ENCODE measurements at regions of chr22 and their contacts with region 1.

Region 1: GRCh38 chr22:41479671-41480396 is 10.9 kb downstream of the ACO2 start:
- DNase-seq: no peak
- ATAC-seq: no peak
- H3K4me3 Mint-ChIP-seq: peak overlapping the region; percentile 79
- H3K27ac Mint-ChIP-seq: peak overlapping the region; percentile 96
- H3K4me1 Mint-ChIP-seq: peaks cover 87% of the 10 kb centered on the region
- H3K27me3 Mint-ChIP-seq: no peaks in the 10 kb centered on the region
- CTCF ChIP-seq: no peak

Region 2: DNA sequence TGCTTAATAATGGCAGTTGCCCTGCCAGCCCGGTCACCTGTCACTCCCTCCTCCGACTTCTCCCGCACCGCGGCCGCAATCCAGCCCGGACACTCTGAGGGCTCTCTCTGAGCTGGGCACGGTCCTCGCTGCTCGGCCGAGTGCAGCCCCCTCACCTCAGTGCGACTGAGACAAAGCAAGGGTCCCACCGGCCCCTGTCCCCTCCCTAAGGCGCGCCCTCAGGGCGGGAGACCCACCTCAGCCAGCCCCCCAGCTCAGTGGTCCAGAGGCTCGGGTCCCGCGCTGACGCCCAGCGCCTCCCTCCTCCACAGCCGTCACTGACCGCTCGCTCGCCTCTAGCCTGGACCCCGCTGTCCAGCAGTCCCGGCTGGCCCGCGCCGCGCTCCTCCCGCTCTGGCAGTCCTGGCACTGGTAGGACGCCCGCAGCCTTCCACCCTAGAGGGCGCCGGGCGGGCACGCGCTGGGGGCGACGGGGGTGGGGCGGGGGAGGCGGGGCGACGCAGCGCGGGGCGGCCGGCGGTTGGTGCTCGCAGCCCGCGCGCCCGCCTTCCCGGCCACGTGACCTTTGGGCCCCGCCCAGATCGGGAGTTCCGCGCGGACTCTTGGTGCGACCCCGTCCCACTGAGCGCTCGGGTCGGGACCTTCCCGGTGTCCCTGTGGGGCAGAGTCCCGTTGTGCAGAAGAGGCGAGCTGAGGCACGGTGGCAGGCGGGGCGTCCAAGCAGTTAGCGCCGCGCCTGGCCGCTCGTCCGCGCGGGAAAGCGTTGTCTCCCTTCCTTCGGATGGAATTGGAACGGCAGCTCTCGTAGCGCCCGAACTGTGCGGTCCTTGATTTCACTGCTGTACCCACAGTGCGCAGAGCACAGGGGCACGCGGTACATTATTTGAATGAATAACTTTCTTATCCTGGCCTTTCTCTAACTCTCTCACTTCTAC is 282.5 kb before region 1 on chr22:
- CTCF ChIA-PET with region 1: no interaction called
- POLR2A ChIA-PET with region 1: interaction called, 13 read pairs
- intact Hi-C with region 1: no loop called
- DNase-seq: peak; percentile 89
- ATAC-seq: peak; percentile 92
- H3K4me3 Mint-ChIP-seq: peak overlapping the region; percentile 89
- H3K27ac Mint-ChIP-seq: no peak overlapping the region
- H3K4me1 Mint-ChIP-seq: peaks cover 8% of the 10 kb centered on the region
- H3K27me3 Mint-ChIP-seq: peaks cover 4% of the 10 kb centered on the region
- CTCF ChIP-seq: no peak

Region 3: DNA sequence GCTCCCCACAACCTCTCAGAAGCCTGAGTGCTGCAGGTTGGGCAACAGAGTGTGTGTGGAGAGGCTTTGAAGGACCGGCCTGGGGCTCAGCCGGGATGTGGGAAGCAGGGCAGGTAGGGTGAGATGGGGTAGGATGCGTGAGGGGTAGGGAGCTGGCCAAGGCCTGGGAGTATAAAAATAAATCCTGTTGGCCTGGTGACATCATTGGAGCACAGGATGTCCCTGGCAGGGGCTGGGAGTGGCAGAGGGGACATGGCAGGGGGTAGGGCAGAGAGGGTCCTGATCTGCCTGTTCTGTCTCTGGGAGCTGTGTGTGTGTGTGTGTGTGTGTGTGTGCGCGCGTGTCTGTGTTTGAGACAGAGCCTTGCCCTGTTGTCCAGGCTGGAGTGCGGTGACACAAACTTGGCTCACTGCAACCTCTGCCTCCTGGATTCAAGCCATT is 69.5 kb before region 1 on chr22:
- CTCF ChIA-PET with region 1: no interaction called
- POLR2A ChIA-PET with region 1: interaction called, 13 read pairs
- intact Hi-C with region 1: no loop called
- DNase-seq: no peak
- ATAC-seq: no peak
- H3K4me3 Mint-ChIP-seq: no peak overlapping the region
- H3K27ac Mint-ChIP-seq: peak overlapping the region; percentile 68
- H3K4me1 Mint-ChIP-seq: peaks cover 62% of the 10 kb centered on the region
- H3K27me3 Mint-ChIP-seq: no peaks in the 10 kb centered on the region
- CTCF ChIP-seq: no peak

Region 4: GRCh38 chr22:41491374-41492100 is 11.7 kb after region 1 on chr22:
- CTCF ChIA-PET with region 1: no interaction called
- POLR2A ChIA-PET with region 1: interaction called, 17 read pairs
- intact Hi-C with region 1: no loop called
- DNase-seq: no peak
- ATAC-seq: no peak
- H3K4me3 Mint-ChIP-seq: no peak overlapping the region
- H3K27ac Mint-ChIP-seq: no peak overlapping the region
- H3K4me1 Mint-ChIP-seq: peaks cover 37% of the 10 kb centered on the region
- H3K27me3 Mint-ChIP-seq: no peaks in the 10 kb centered on the region
- CTCF ChIP-seq: no peak

Region 5: DNA sequence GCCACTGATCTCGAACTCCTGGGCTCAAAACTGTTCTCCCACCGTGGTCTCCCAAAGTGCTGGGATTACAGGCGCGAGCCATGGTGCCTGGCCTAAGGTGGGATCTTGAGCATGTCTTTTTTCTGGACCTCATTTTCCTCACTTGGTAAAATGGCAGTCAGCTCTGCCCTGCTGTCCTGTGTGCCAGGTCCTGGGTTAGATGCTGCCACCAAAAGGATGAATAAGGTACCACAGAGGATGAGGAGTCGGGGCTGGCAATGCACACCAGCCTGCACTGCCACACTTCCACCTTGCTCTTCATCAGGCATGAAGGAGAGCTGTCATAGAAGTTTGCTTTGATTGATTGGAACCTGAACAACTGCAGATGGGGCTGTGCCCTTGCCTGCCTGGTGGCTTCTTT is 21.4 kb after region 1 on chr22:
- CTCF ChIA-PET with region 1: interaction called, 31 read pairs
- POLR2A ChIA-PET with region 1: interaction called, 58 read pairs
- intact Hi-C with region 1: loop called (anchors 1 kb)
- DNase-seq: no peak
- ATAC-seq: peak; percentile 88
- H3K4me3 Mint-ChIP-seq: no peak overlapping the region
- H3K27ac Mint-ChIP-seq: peak overlapping the region; percentile 83
- H3K4me1 Mint-ChIP-seq: peaks cover 47% of the 10 kb centered on the region
- H3K27me3 Mint-ChIP-seq: no peaks in the 10 kb centered on the region
- CTCF ChIP-seq: no peak

Region 6: DNA sequence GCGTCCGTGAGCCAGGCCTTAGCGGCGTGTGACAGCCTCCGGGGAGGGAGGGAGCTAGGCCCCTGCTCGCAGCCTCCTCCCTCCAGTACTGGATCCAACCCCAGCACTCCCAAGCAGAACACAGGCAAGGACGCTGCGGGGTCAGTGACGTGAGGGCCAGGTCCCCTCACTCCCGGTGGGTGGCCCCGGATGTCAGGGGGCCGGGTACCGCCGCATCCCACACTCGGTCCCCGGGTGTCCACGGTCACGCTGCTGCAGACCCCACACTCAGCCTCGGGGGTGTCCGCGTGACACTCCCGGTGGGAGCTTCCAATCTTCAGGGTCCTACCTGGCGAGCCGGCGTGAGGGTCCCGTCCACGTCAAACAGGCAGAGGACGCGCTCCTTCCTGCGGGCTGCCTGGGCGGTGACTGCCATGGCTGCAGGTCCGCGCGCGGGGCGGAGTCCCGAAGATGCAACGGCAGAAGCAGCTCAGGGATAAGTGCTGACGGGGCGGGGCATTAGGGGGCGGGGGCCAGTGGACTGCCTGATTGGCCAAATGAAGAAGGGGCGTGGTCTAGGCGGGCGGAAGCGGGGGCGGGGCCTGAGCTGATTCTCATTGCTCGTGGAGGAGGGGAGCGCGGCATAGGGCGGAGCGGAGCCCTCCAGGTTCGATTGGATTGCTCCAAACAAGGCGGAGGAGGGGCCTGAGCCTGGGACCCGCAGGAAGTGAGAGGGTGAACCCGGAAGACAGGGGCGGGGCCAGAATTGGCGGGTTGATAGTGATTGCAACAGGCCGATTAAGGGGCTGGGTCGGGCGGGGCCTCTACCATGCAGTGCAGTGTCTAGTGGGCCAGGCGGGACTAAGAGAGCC is 109.8 kb after region 1 on chr22 and contains the start of gene PMM1:
- CTCF ChIA-PET with region 1: no interaction called
- POLR2A ChIA-PET with region 1: no interaction called
- intact Hi-C with region 1: no loop called
- DNase-seq: peak; percentile 98
- ATAC-seq: peak; percentile 98
- H3K4me3 Mint-ChIP-seq: peak within 1 kb of the TSS; percentile 91
- H3K27ac Mint-ChIP-seq: peak within 1 kb of the TSS; percentile 88
- H3K4me1 Mint-ChIP-seq: peaks cover 12% of the 10 kb centered on the region
- H3K27me3 Mint-ChIP-seq: no peaks in the 10 kb centered on the region
- CTCF ChIP-seq: no peak
- total RNA-seq, gene PMM1: 13.0 and 15.1 TPM in 2 replicates

Region 7: DNA sequence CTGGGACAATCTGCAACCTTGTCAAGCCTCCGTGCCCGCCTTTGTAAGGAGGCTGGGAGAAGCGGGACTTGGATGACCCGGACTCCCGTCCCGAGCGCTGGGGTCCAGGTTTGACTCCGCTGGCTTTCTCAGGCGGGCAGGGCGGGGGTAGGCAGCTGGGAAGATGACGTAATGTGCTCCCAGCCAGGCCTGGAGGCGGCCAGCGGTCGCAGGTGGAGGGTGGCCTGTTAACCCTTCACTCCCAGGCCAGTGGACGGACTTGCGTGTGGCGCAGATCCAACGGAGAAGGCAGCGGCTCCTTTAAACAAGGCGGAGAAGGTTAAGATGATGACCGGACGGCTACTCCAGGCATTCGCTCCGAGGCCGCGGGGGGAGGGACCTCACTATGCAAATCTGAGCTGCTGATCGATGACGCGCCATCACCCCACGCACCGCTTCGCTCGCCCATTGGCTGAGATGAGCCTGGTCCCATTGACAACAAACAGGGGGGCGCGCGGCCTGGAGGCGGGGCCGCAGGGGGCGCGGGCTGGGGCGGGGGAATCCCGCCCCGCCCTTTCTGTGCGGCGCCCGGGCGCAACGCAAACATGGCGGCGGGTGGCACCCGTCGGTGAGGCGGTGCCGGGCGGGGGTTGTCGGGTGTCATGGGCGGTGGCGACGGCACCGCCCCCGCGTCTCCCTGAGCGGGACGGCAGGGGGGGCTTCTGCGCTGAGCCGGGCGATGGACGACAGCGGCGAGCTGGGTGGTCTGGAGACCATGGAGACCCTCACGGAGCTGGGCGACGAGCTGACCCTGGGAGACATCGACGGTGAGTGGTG is 352.9 kb after region 1 on chr22 and contains the start of gene SREBF2:
- CTCF ChIA-PET with region 1: no interaction called
- POLR2A ChIA-PET with region 1: no interaction called
- intact Hi-C with region 1: no loop called
- DNase-seq: peak; percentile 96
- ATAC-seq: peak; percentile 85
- H3K4me3 Mint-ChIP-seq: peak within 1 kb of the TSS; percentile 98
- H3K27ac Mint-ChIP-seq: peak within 1 kb of the TSS; percentile 99
- H3K4me1 Mint-ChIP-seq: peaks cover 62% of the 10 kb centered on the region
- H3K27me3 Mint-ChIP-seq: no peaks in the 10 kb centered on the region
- CTCF ChIP-seq: no peak
- total RNA-seq, gene SREBF2: 253 and 307 TPM in 2 replicates

Measured in activated B cell treated with CpG ODN at 0.5 μM for 24 hours (primary cell).